AG04450 (cell line): ENCODE measurements at regions of chr10 and their contacts with region 1.

Region 1: GRCh38 chr10:13571541-13571940 is 15.2 kb upstream of the PRPF18 start:
- DNase-seq: no peak
- H3K4me3 ChIP-seq: no peak overlapping the region
- H3K27ac ChIP-seq: no peak overlapping the region
- H3K27me3 ChIP-seq: peaks cover 2% of the 10 kb centered on the region
- CTCF ChIP-seq: no peak

Region 2: DNA sequence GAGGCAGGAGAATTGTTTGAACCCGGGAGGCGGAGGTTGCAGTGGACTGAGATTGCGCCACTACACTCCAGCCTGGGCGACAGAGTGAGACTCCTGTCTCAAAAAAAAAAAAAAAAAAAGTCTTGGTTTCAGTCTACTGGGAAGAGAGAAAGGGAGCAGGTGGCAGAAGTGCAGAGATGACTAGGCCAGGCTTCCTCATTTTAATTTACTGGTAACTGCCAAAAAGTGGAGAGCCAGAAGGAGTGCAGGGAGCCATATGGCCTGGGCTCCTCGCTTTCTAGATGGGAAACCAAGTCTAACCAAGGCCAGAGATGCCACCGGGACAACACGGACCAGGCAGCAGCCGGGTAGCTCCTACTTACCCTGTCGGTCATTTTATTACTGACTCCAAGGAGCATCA is 235.7 kb before region 1 on chr10:
- CTCF ChIA-PET with region 1: no interaction called
- POLR2A ChIA-PET with region 1: interaction called, 10 read pairs
- DNase-seq: no peak
- H3K4me3 ChIP-seq: no peak overlapping the region
- H3K27ac ChIP-seq: no peak overlapping the region
- H3K27me3 ChIP-seq: no peaks in the 10 kb centered on the region
- CTCF ChIP-seq: no peak

Region 3: DNA sequence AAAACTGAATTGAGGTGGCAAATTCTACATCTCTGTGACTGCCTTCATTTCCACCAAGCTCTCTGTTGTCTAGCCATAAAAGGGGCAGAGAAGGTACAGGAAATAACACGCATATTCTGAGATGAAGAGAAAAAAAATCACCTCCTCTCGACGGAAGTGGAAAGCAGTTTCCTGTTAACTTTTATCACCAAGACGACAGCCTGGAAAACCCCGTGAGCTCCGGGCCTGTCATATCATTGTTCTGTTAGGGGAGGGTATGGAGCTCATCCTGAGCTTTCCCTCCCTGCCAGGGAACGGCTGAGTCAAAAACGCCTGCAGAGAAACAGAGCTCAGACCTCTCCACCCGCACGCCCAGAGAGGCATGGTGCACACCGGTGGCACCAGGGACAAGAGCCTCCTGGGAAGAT is 215.5 kb after region 1 on chr10:
- CTCF ChIA-PET with region 1: no interaction called
- POLR2A ChIA-PET with region 1: no interaction called
- DNase-seq: no peak
- H3K4me3 ChIP-seq: no peak overlapping the region
- H3K27ac ChIP-seq: no peak overlapping the region
- H3K27me3 ChIP-seq: no peaks in the 10 kb centered on the region
- CTCF ChIP-seq: no peak